Mammary epithelial cell (primary cell): ENCODE measurements at regions of chr1 and their contacts with region 1.

Region 1: DNA sequence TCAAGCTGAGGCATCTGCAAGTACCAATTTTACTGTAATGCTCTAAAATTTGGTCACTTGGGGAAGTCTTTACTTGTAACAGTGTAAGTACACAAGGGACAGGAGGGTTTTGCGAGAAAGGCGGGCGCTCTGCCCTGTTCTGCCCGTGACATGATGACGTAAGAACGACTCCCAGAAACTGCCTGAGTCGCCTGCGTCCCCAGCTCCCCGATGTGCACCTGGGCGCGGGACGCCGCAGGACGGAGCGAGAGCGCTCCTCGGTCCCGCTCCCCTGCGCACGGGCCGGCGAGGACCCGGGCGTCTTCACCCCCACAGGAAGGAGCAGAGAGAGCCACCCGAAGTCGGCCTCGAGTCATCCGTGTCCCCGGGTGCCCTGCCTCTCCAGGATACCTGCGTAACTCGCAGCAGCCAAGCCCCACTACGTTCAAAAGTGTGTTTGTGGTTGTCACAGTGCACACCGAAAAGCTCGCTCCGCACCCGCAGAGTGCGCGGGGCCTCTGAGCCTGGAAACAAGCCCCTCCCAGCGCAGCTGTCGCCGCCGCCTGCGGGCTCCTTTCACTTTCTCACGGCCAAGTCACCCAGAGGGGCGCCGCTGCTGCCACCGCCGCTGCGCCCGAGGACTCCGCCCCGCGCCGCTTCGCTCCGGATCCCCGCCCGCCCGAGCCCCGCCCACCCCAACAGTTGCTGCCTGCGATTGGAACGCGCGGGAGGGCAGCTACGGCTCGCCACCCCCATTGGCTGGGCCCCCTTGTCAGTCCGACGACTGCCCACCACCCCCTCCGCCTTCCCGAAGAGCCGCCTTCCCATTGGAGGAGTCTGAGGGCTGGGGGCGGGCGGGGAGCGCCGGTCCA is 3.2 kb upstream of the ZBTB18 start:
- DNase-seq: peak; percentile 99
- H3K4me3 ChIP-seq: peak overlapping the region; percentile 61 to 86 (median 82)
- H3K27ac ChIP-seq: peak overlapping the region; percentile 67
- H3K4me1 ChIP-seq: peaks cover 9% of the 10 kb centered on the region
- H3K27me3 ChIP-seq: peaks cover 8% of the 10 kb centered on the region
- CTCF ChIP-seq: no peak

Region 2: DNA sequence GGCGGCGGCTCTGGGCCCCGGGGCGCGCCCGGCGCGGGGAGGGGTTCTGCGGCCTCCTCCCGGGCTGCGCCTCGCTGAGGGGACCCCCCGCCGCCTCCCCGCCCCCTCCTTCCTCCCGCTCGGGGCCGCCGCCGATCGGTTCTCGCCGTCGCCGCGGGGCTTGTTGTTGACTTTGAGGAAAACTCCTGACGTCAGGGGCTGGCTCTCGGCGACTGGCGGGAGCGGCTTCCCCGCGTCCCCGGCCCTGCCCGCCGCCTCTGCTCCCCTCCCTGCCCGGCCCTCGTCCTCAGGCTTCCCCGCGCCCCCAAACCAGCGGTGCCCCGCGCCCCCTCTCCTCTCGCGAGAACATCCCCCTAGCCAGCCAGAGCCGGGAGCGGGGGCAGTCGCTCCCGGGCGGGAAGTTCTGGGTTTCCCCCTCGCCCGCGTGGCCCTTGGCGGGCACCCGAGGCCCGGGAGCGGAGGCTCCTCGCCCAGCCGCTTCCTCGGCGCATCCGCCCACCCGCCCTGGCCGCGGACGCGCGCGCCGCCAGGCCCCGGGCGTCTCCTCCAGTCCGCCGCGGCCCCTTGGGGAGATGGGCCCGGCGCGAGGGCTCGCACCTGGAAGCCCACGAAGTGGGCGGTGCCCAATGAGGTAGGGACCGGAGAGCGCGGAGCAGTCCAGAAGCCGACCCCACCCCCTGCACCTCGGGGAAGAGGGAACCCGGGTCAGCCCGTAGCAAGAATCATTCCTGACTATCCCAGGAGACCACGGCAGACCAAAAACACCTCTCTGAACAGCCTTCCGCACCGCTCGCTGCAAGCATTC is 197.2 kb before region 1 on chr1:
- CTCF ChIA-PET with region 1: no interaction called
- dilution Hi-C with region 1: no loop called
- in situ Hi-C with region 1: no loop called
- intact Hi-C with region 1: loop called (anchors 5 kb)
- DNase-seq: peak; percentile 72
- H3K4me3 ChIP-seq: peak overlapping the region; percentile 60 to 75 (median 69)
- H3K27ac ChIP-seq: peak overlapping the region; percentile 72
- H3K4me1 ChIP-seq: peaks cover 10% of the 10 kb centered on the region
- H3K27me3 ChIP-seq: no peaks in the 10 kb centered on the region
- CTCF ChIP-seq: no peak

Region 3: DNA sequence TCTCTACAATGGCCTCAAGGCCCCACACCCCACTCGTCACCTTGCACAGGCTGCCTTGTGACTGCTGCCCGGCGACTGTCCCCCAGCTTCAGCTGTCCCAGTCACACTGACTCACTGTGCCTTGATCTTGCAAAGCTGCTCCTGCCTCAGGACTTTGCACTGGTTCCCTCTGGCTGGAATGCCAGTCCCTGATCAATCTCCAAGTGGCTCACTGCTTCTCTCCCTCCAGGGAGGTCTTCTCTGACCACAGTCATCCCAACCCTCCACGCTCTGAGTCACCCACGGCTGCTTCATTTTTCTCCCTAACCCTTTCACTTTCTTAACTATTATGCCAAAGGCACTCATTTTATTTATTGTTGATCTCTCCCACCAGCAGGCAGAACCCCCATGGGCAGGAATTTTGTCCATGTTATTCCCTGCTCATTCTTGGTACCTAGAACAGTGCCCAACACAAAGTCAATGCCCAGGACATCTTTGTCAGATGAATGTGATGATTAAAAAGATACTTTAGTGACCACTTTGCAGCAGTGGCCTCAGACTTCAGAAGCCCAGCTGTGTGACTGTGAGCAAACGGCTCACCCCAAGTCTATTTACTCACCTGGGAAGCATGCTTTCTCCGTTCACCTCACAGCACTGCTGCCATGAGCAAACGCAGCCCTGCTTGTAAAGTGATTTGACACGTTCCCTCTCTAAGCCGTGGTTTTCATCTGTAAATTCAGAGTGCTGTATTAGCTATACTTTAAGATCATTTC is 56.6 kb after region 1 on chr1:
- CTCF ChIA-PET with region 1: no interaction called
- dilution Hi-C with region 1: no loop called
- in situ Hi-C with region 1: no loop called
- intact Hi-C with region 1: no loop called
- DNase-seq: peak; percentile 37
- H3K4me3 ChIP-seq: no peak overlapping the region
- H3K27ac ChIP-seq: no peak overlapping the region
- H3K4me1 ChIP-seq: peaks cover 9% of the 10 kb centered on the region
- H3K27me3 ChIP-seq: peaks cover 6% of the 10 kb centered on the region
- CTCF ChIP-seq: no peak

Region 4: DNA sequence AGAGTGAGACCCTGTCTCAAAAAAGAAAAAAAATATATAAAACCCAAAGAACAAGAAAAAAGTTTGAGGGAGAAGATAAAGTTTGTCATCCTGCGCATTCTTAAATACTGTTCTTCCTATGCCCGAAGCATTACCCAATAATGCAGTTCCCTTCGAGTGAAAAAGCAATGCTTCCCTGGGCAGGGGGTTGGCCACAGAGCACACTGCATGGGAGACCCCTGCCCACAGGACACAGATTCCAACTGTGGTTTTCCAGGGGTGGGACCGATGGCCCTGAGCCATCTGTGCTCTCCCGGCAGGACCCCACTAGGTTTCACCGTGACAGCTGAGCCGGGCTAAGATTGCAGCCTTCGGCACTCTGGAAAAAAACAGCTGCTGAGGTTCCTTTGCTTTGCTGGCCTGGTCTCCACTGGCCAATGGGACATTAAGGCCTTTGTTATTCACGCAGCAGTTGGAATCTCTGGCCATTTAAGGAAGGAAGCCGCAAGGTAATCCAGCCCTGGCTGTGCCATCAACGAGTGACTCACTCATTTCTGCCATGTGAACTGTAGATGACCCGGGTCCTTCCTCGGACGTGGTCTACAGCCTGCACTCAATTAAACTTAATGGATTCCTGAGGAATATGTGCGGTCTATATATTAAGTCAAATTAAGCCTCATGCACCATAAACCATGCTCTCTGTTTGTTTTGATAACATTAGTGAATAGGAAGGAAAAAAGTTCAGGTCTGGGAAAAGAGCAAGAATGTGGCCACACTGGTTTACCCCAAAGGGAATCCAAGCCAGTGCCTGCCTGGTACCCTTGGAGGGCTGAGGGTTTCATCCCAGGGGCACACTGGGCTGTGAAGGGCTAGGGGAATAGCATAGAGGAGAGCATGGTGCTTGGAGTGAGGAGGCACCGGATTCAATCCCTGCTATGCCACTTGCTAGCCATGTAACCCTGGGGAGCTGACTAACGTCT is 166.4 kb after region 1 on chr1:
- CTCF ChIA-PET with region 1: no interaction called
- dilution Hi-C with region 1: no loop called
- in situ Hi-C with region 1: no loop called
- intact Hi-C with region 1: loop called (anchors 5 kb)
- DNase-seq: peak; percentile 82
- H3K4me3 ChIP-seq: no peak overlapping the region
- H3K27ac ChIP-seq: no peak overlapping the region
- H3K4me1 ChIP-seq: peaks cover 10% of the 10 kb centered on the region
- H3K27me3 ChIP-seq: no peaks in the 10 kb centered on the region
- CTCF ChIP-seq: no peak

Region 5: GRCh38 chr1:244231572-244232315 is 183.9 kb after region 1 on chr1:
- CTCF ChIA-PET with region 1: no interaction called
- dilution Hi-C with region 1: no loop called
- in situ Hi-C with region 1: no loop called
- intact Hi-C with region 1: loop called (anchors 10 kb)
- DNase-seq: peak; percentile 21
- H3K4me3 ChIP-seq: peak overlapping the region in 2 of 3 experiments; percentile 21 to 28
- H3K27ac ChIP-seq: no peak overlapping the region
- H3K4me1 ChIP-seq: peaks cover 14% of the 10 kb centered on the region
- H3K27me3 ChIP-seq: no peaks in the 10 kb centered on the region
- CTCF ChIP-seq: no peak